ENCODE measurements at regions of chr3 and their contacts with region 1.

Region 1: GRCh38 chr3:112966633-112967032 is 8.3 kb downstream of the CD200R1 start:
- H3K4me3 Mint-ChIP-seq: peak overlapping the region; percentile 74
- H3K27ac Mint-ChIP-seq: peak overlapping the region; percentile 89
- H3K4me1 Mint-ChIP-seq: peaks cover 90% of the 10 kb centered on the region
- H3K27me3 Mint-ChIP-seq: no peaks in the 10 kb centered on the region

Region 2: GRCh38 chr3:112425858-112426750 is 540.5 kb before region 1 on chr3:
- intact Hi-C with region 1: no loop called
- H3K4me3 Mint-ChIP-seq: no peak overlapping the region
- H3K27ac Mint-ChIP-seq: no peak overlapping the region
- H3K4me1 Mint-ChIP-seq: peaks cover 28% of the 10 kb centered on the region
- H3K27me3 Mint-ChIP-seq: no peaks in the 10 kb centered on the region

Region 3: DNA sequence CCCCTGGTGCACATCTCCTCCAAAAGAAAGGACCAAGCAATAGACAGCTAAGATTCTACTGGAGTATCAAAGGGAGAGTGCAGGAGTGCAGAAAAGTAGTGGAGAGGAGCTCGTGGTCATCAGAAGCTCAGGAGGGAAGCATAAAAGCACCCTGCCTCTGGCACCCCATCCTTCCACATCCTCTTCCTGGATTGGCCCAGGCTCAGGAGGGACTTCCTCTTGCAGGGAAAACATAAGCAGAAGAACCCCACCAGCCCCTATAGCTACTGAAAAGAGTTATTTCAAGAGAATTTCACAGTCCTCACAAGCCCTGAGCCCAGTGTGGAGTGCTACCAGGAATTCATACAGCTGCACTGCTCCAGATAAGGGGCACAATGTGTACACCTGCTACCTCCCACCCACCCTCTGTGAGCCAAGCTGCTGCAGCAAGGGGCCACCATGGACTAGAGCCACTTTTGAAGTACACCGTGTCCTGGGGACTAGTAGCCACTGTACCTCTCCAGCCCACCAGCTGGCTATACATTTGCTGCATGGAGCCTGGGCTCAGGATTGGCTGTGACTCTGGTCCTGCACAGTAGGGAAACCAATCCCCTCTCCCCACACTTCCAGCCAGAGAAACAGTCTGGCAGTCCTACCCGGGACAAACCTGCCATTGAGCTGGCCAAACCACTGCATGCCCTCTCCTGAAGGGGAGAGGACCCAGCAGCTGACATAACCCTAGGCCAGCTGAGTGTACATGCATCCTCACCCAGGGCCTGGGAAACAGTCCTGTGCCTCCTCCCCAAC is 34.7 kb before region 1 on chr3:
- intact Hi-C with region 1: loop called (anchors 5 kb)
- H3K4me3 Mint-ChIP-seq: no peak overlapping the region
- H3K27ac Mint-ChIP-seq: peak overlapping the region; percentile 76
- H3K4me1 Mint-ChIP-seq: peaks cover 56% of the 10 kb centered on the region
- H3K27me3 Mint-ChIP-seq: no peaks in the 10 kb centered on the region

Region 4: DNA sequence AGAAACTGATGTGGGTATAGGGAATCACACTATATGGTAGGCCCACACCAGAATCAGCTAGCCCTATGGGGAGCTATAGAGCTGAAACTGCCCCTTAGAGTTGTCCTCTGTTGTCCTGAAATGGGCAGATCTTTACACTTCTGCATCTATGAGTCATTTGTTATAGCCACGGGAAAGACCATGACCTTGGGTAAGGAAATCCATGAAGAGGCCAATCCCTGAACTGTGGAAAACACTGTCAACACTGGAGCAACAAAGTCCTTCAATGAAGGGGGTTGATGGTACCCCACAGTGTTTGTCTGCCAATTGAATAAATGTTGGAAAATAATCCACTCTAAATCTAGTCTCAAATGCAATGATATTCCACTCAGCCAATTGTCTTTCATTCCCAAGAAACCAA is 13.4 kb after region 1 on chr3:
- intact Hi-C with region 1: no loop called
- H3K4me3 Mint-ChIP-seq: no peak overlapping the region
- H3K27ac Mint-ChIP-seq: no peak overlapping the region
- H3K4me1 Mint-ChIP-seq: peaks cover 59% of the 10 kb centered on the region
- H3K27me3 Mint-ChIP-seq: no peaks in the 10 kb centered on the region

Region 5: DNA sequence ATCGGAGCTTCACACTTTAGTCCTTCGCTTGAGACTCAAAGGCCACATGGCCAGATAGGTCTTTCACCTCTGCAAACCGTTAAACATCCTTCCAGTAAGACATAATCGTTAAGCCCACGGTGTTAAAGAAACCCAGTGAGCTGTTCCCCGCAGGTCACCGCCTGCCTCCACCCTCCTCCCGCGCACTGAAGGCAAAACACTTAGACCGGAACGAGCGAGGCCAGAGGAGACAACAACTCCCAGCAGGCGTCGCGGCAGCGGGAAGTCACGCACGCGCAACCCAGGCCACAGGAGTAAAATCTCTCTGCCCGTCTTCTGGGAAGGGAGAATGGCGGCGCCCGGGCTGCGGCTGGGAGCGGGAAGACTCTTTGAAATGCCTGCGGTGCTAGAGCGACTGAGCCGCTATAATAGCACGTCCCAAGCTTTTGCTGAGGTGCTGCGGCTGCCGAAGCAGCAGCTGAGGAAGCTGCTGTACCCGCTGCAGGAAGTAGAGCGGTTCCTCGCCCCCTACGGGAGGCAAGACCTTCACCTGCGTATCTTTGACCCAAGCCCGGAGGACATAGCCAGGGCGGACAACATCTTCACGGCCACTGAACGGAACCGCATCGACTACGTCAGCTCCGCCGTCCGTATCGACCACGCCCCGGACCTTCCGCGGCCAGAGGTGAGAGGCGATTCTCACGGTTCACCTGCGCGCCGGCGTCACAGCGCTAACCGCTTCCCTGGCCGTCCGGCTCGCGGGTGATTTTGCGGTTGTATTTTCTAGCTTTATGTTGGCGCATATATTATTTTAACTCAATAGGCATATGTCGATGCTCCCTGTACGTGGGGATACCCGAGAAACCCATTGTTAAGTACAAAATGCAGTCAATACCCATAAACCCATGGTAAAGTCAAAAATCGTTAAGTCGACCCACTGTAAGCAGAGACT is 24.3 kb after region 1 on chr3 and contains the start of gene GTPBP8:
- intact Hi-C with region 1: no loop called
- H3K4me3 Mint-ChIP-seq: peak within 1 kb of the TSS; percentile 88
- H3K27ac Mint-ChIP-seq: peak within 1 kb of the TSS; percentile 96
- H3K4me1 Mint-ChIP-seq: peaks cover 23% of the 10 kb centered on the region
- H3K27me3 Mint-ChIP-seq: no peaks in the 10 kb centered on the region

Region 6: GRCh38 chr3:113546414-113546893 is 579.8 kb after region 1 on chr3:
- intact Hi-C with region 1: no loop called
- H3K4me3 Mint-ChIP-seq: no peak overlapping the region
- H3K27ac Mint-ChIP-seq: no peak overlapping the region
- H3K4me1 Mint-ChIP-seq: peaks cover 16% of the 10 kb centered on the region
- H3K27me3 Mint-ChIP-seq: no peaks in the 10 kb centered on the region

Measured in dendritic cell treated with granulocyte-macrophage colony-stimulating factor and Interleukin-4, amounts not matched to agents 40 ng/mL and 50 ng/mL, for 4 days (primary cell).